ENCODE measurements at regions of chr3 and their contacts with region 1.

Region 1: GRCh38 chr3:37855363-37855970 is 6.2 kb upstream of the CTDSPL start:
- H3K4me3 Mint-ChIP-seq: no peak overlapping the region
- H3K27ac Mint-ChIP-seq: no peak overlapping the region
- H3K4me1 Mint-ChIP-seq: peaks cover 20% of the 10 kb centered on the region
- H3K27me3 Mint-ChIP-seq: no peaks in the 10 kb centered on the region

Region 2: DNA sequence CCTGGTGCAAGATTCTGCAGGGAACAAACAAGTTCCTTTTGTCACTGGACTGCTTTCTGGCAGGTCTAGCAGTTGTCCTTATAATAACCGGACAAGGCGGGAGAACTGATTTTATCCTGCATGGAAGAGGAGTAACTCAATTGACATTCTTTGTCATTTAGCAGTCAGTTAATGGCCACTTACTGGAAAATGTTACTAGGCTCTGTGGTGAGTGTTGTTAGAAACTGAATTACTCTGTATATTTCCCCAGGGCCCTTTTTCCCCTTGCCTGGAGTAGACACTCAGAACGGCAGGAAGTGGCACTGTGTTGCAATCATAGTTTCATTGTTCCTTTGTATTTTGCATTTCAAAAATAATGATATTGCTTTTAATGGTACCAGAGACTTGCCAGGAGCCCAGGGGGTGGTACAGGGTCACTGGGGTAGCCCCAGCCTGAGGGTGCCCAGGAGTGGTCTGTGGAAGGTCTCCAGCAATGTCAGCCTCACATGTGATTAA is 362.4 kb before region 1 on chr3:
- intact Hi-C with region 1: no loop called
- H3K4me3 Mint-ChIP-seq: no peak overlapping the region
- H3K27ac Mint-ChIP-seq: peak overlapping the region; percentile 57
- H3K4me1 Mint-ChIP-seq: peaks cover 64% of the 10 kb centered on the region
- H3K27me3 Mint-ChIP-seq: peaks cover 3% of the 10 kb centered on the region

Region 3: GRCh38 chr3:37967260-37967881 is 111.9 kb after region 1 on chr3:
- intact Hi-C with region 1: loop called (anchors 1 kb)
- H3K4me3 Mint-ChIP-seq: no peak overlapping the region
- H3K27ac Mint-ChIP-seq: no peak overlapping the region
- H3K4me1 Mint-ChIP-seq: peaks cover 10% of the 10 kb centered on the region
- H3K27me3 Mint-ChIP-seq: no peaks in the 10 kb centered on the region

Region 4: DNA sequence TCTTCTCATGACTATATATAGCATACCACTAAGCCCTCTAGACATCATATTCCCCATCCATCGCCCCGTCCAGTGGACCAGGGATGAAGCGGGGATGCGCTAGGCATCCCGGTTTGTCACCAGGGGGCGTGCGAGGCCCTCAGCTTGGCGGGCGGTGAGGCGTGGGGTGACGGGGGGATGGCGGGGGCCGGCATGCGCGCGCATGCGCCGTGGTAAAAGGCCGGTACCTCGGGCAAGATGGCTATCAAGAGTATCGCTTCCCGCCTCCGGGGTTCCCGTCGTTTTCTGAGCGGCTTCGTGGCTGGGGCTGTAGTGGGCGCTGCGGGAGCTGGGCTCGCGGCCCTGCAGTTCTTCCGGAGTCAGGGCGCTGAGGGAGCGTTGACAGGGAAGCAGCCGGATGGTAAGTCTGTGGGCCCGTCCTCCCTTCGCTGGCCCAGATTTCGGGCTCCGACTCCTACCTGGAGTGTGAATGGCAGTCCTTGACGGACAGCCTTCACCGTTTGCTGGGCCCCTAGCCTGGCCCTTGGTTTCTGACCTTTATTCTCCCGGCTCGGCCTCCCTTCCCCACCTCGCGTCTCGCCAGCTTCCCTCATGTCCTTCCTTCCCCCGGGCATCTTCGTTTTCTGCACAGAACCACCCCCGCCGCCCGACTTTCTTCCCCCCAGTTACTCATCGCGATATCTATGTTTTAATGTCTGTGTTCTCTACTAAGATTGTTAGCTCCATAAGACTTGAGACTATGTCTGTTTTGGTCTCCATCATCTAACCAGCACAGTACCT is 640.9 kb after region 1 on chr3 and contains the start of gene EXOG:
- intact Hi-C with region 1: loop called (anchors 10 kb)
- H3K4me3 Mint-ChIP-seq: peak within 1 kb of the TSS; percentile 85
- H3K27ac Mint-ChIP-seq: peak within 1 kb of the TSS; percentile 93
- H3K4me1 Mint-ChIP-seq: peaks cover 19% of the 10 kb centered on the region
- H3K27me3 Mint-ChIP-seq: no peaks in the 10 kb centered on the region